ENCODE measurements at regions of chr15 and their contacts with region 1.

Region 1: DNA sequence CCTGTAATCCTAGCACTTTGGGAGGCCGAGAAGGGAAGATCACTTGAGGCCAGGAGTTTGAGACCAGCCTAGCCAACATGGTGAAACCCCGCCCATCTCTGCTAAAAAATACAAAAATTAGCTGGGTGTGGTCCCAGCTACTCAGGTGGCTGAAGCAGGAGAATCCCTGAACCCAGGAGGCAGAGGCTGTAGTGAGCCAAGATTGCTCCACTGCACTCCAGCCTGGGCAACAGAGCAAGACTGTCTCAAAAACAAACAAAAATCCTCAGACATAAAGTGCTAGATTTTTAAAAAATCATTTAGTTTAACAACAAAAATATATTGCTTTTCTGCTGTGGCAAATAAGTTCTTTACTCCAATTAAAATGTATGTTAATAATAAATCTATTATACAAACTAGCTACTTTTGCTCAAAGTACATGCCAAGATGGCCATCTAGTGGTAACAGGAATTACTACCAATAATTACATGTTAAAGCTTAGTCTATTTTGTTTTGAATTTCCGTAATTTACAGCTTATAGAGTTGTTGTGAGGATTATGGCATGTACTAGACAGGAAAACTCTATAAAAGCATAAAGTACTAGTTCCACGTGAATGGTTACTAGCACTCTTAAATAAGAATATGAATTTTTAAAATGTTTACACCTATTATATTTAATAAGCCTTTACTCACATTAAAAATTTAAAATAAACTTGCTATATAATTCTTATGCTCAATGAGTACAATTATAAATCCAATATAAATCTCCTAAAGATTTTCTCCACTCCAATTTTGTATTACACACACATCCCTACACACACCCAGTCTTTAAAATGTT is 39.0 kb downstream of the GABPB1 start:
- DNase-seq: no peak
- H3K4me3 ChIP-seq: no peak overlapping the region
- H3K27ac ChIP-seq: no peak overlapping the region
- H3K4me1 ChIP-seq: peaks cover 0 to 10% of the 10 kb centered on the region in 2 donors
- H3K27me3 ChIP-seq: no peaks in the 10 kb centered on the region
- CTCF ChIP-seq: peak; percentile 62 to 83 (median 70)
- POLR2A ChIP-seq: no peak

Region 2: DNA sequence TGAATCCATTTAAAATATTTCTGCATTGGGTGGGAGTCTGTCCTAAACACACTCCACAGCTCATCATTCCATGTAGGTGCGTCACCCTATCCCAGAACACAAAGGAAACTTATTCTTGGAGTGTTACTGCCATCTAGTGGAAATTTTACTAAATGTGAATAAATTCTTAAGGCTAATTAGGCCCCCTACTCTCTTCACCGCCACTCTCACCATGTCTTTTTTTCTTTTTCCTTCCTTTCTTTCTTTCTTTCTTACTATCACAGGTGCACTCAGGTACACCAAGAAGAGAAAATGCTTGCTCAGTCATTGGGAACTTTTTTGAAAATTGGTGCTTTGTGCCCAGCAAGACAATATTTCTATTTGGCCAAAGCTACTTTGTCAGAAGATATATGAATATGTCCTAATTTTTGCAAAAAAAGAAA is 170.6 kb before region 1 on chr15:
- intact Hi-C with region 1: loop called in 1 of 2 experiments (anchors 10 kb)
- DNase-seq: peak in 3 of 7 donors; percentile 35 to 45 (median 41)
- H3K4me3 ChIP-seq: no peak overlapping the region
- H3K27ac ChIP-seq: no peak overlapping the region
- H3K4me1 ChIP-seq: no peaks in the 10 kb centered on the region
- H3K27me3 ChIP-seq: no peaks in the 10 kb centered on the region
- CTCF ChIP-seq: peak; percentile 51 to 86 (median 70)
- POLR2A ChIP-seq: no peak